Right lobe of liver (tissue), 6 donors: ENCODE measurements at regions of chr12 and their contacts with region 1.

Region 1: DNA sequence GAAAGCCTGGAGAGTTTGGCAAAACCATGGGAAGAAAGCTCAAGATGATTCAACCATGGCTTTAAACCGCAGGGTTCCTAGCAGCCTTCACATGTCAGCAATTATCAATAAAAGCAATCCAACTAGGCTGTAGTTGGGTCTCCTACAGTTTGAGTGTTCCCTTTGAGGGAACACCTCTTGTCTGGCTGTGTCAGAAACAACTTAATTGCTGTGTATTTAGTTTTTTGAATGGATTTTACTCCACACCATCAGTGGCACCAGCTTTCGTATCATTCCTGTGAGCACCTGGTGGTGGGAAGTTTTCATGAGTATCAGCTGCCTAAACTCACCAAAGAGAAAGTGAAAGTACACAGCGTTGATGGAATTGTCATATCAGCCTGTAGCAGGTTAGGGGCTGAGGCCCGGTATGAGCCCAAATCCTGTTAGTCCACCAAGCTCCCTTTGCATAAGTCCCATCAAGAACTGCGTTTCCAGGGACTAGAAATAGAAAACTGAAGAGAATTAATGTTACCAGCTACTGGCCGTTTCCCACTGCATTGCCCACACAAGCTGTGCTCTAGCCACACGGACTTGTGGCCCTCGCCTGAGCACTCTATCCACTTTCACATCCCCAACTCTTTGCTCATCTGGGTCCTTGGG is 10.9 kb upstream of the IL26 start:
- DNase-seq: peak in 2 of 3 donors; percentile 23 to 45
- ATAC-seq: peak; percentile 91 to 94 (median 93)
- H3K4me3 ChIP-seq: peak overlapping the region; percentile 24 to 48 (median 42)
- H3K27ac ChIP-seq: peak overlapping the region; percentile 23 to 43 (median 34)
- H3K4me1 ChIP-seq: no peaks in the 10 kb centered on the region
- H3K27me3 ChIP-seq: no peaks in the 10 kb centered on the region
- CTCF ChIP-seq: peak in 3 of 4 donors; percentile 10 to 40 (median 24)
- POLR2A ChIP-seq: no peak

Region 2: DNA sequence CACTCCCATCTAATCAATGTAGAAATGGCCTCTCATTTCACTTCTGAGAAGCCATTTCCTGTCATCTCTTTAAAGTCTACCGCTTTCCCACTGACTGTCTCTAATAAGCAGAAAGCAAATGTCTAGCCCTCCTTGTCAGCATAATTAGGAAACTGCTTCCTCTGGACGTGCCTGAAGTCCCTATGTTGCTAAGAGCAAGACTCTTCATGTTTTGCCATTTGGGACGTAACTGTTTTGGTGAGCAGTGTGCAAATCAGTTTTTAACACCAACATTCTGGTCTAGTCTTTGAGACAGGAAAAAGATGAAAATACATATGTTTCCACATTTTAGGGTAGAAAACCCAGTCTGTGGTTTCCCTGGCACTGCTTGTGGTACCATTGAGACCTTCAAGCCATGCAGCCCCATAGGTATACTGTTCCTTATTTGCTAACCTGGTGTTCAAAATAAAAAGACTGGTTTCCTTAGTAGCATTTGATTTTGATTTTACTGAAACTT is 99.2 kb before region 1 on chr12:
- intact Hi-C with region 1: no loop called
- DNase-seq: no peak
- ATAC-seq: no peak
- H3K4me3 ChIP-seq: no peak overlapping the region
- H3K27ac ChIP-seq: no peak overlapping the region
- H3K4me1 ChIP-seq: no peaks in the 10 kb centered on the region
- H3K27me3 ChIP-seq: no peaks in the 10 kb centered on the region
- CTCF ChIP-seq: no peak
- POLR2A ChIP-seq: no peak

Region 3: DNA sequence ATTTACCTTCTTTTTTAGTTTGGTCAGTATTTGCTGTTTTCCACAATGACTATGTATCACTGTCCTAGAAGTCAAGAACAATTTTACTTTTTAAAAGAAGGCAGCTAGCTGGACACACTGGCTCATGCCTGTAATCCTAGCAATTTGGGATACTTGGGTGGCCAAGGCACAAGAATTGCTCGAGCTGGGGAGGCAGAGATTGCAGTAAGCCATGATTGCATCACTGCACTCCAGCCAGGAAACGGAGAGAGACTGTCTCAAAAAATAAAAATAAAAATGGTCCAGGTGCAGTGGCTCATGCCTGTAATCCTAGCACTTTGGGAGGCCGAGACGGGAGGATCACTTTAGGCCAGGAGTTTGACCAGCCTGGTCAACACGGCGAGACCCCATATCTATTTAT is 67.3 kb after region 1 on chr12:
- intact Hi-C with region 1: loop called in 1 of 2 experiments (anchors 10 kb)
- DNase-seq: no peak
- ATAC-seq: no peak
- H3K4me3 ChIP-seq: no peak overlapping the region
- H3K27ac ChIP-seq: no peak overlapping the region
- H3K4me1 ChIP-seq: no peaks in the 10 kb centered on the region
- H3K27me3 ChIP-seq: no peaks in the 10 kb centered on the region
- CTCF ChIP-seq: no peak
- POLR2A ChIP-seq: no peak

Region 4: GRCh38 chr12:68317047-68317667 is 80.6 kb after region 1 on chr12:
- intact Hi-C with region 1: loop called in 1 of 2 experiments (anchors 10 kb)
- DNase-seq: no peak
- ATAC-seq: peak in 3 of 4 donors; percentile 63 to 66 (median 63)
- H3K4me3 ChIP-seq: no peak overlapping the region
- H3K27ac ChIP-seq: no peak overlapping the region
- H3K4me1 ChIP-seq: no peaks in the 10 kb centered on the region
- H3K27me3 ChIP-seq: no peaks in the 10 kb centered on the region
- CTCF ChIP-seq: peak; percentile 60 to 70 (median 68)
- POLR2A ChIP-seq: no peak